RWPE1 (cell line): ENCODE measurements at regions of chr10 and their contacts with region 1.

Region 1: DNA sequence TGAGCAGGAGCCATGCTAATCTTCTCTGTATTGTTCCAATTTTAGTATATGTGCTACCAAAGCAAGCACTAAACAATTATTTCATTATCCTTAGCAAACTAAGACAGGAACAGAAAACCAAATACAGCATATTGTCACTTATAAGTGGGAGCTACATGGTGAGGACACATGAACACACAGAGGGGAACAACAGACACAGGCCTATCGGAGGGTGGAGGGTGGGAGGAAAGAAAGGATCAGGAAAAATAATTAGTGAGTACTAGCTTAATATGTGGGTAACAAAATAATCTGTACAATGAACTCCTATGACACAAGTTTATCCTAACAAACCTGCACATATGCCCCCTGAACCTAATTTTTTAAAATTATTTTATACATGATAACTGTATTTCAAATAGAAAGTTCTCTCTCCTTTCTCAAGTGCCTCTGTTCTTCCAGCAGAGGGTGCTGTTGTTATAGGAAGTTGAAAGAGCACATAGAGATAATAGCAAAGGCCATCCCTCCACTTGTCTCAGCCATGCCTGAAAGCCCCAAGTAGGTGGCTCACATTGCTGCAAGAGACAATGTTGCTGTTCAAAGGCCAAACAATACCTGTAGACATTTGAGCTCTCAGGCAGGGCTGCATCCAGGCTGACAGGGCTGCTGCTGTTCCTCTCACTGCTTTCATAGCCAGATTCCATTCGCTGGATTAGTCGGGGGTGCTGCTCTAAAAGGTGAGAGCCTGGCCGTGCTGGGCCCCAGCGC is 33.4 kb upstream of the PPP3CB start:
- DNase-seq: peak; percentile 63
- H3K27ac ChIP-seq: no peak overlapping the region
- CTCF ChIP-seq: peak; percentile 78

Region 2: DNA sequence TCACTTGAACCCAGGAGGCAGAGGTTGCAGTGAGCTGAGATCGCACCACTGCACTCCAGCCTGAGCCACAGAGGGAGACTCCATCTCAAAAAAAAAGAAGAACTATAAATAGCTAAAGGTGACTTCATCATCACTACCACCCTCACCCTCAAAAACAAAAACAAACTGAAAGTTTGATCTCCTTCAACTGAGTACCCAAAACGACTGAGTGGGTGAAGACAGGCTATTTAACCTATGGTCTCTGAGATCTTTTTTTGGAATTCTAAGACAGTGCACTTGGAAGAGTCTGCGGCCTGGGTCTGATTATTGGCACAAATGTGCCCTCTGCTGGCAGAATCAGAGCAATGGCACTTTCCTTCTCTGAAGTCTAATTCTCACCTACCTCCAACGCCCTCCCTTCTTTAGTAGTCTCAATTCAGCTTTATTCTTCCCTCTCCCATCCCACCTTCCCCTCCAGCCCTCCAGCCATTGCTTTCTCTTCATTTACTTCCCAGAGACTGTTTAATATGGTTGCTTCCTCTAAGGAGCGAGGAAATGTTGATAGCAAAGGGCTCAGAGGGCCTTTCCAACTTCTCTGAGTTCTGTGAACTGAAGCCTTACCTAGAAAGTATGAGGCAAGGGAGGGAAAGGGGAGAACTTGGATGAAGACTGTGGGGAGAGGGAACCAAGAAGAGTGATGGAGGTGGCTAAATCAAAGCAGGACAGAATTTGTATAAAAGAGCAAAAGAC is 114.9 kb after region 1 on chr10:
- CTCF ChIA-PET with region 1: interaction called, 62 read pairs
- POLR2A ChIA-PET with region 1: interaction called, 3 read pairs
- DNase-seq: peak; percentile 81
- H3K27ac ChIP-seq: no peak overlapping the region
- CTCF ChIP-seq: peak; percentile 77